ENCODE measurements at regions of chr2 and their contacts with region 1.

Region 1: DNA sequence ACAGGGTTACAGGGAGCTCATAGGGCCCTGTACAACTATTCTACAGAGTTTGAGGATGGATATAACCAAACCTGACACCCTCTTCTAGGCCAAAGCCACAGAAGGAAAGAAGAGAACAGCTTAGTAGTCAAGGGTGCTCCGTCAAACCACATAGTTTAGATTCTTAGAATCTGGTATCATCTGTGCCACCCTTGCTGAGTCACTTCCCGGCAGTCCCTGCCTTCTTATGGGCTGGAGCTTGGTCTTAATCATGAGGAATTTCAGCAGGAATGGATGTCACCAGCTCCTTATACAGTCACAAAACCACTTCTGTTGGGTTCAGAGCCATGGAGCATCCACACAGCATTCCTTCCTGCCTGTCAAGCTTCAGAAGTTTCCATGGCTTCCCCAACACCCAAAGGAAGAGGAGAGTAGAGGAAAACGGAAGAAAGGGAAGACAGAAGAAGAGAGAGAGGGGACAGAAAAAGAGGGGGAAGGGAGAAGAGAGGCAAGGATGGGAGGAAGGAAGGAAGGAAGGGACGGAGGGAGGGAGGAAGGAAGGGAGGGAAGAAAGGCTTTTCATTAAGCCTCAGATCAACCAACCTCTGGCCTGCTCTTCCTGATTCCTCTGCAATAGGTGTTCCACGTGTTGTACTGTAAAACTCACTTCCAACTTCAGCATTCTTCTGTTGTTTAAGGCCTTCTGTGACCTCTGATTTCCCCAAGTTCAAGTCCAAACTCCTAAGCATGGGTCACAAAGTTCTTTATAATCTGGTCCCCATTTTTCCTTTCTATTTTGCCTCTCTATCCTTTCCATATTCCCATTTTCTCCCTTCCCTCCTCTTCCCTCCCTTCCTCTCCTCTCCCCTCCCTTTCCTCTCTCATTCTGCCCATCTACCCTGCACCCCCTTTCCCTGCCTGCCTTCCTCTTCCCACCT is 246.1 kb upstream of the TNP1 start:
- DNase-seq: peak; percentile 48 to 93
- H3K4me3 ChIP-seq: no peak overlapping the region
- H3K27ac ChIP-seq: peak overlapping the region; percentile 82 to 86
- H3K4me1 ChIP-seq: peaks cover 3 to 18% of the 10 kb centered on the region in 2 donors
- H3K27me3 ChIP-seq: no peaks in the 10 kb centered on the region
- CTCF ChIP-seq: no peak

Region 2: DNA sequence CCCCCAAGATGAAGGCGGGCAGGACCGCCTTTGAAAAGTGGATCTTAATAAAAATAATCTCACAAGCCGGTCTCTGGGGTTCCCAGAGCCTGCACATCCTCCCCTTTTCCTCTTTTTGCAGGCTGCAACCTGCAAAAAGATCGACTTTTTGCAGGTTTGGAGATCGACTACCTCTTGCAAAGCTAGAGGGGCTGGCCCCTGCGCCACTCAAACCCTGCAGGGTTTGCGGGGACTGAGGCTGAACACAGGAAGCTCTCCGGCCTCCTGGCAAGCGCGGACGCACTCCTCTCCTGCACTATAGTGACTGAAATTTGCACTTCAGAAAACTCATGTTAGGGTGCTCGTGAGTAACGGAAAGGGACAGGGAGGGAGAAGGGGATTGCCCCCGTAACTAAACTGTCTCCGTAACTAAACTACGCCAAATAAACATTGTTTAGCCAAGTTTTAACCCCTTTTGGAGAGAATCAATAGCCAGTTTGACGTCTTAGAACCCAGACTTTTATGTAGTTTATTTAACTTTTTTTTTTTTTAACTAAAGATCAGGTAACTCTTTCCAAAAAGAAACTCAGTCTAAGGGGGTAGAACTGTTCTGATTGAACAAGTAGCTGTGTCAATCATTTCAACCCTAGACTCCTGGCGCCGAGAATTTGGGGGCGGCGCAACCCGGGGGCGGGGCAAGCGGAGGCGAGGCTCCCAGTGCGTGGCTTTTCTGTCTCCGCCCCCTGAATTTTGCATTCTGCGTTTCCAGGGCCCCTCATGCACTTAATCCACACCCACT is 413.2 kb before region 1 on chr2:
- intact Hi-C with region 1: loop called (anchors 2 kb)
- DNase-seq: peak; percentile 64 to 93
- H3K4me3 ChIP-seq: peak overlapping the region; percentile 58 to 89
- H3K27ac ChIP-seq: peak overlapping the region; percentile 87 to 93
- H3K4me1 ChIP-seq: peaks cover 20 to 49% of the 10 kb centered on the region in 2 donors
- H3K27me3 ChIP-seq: no peaks in the 10 kb centered on the region
- CTCF ChIP-seq: no peak

Region 3: DNA sequence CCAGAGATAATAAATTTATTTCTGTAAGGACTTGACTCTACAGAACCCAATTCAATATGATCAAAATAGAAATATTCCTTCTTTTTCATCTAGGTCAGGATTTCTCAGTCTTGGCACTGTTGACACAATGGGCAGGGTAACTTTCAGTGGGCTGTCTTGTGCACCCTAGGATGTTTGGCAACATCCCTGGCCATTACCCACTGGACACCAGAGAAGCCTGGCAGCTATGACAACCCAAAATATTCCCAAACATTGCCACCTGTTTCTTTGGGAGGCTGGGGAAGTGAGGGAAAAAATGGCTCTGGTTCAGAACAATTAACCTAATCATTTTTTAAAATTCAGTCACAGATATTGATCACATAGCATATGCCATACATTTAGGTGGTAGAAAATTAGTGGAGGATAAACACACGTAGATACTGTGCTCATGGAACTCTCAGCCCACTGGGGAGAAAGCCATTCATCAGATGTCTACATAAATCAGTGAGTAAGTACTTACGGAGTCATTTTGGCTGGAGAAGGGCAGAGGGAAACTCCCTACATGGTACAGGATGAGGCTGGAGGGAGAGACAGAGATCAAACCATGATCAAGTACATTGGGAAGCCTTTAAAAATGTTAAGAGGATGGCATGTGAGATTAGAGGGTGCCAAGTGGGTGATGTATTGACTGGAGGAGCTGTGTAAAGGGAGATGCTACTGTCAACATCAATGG is 245.4 kb before region 1 on chr2:
- intact Hi-C with region 1: no loop called
- DNase-seq: no peak
- H3K4me3 ChIP-seq: no peak overlapping the region
- H3K27ac ChIP-seq: no peak overlapping the region
- H3K4me1 ChIP-seq: peaks cover 0 to 3% of the 10 kb centered on the region in 2 donors
- H3K27me3 ChIP-seq: no peaks in the 10 kb centered on the region
- CTCF ChIP-seq: no peak

Region 4: DNA sequence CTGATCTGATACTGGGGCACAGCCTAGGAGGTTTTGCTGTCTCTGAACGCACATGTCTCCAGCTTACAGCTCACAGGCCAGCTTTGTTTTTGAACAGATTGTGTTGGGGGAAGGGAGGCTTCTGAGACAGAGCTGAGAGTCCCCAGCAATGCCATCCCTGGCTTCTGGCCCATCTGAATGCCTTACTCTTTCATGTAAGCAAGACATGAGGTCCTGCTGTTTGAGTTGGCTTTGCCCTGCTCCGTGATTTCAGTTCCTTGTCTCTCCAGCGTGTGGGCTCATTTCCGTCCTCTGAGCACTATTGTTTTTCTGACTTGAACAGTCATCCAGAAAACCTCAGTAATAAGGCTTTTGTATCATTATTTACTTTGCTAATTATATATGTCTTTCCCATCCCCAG is 51.2 kb before region 1 on chr2:
- intact Hi-C with region 1: loop called (anchors 5 kb)
- DNase-seq: peak in 1 of 2 donors; percentile 70
- H3K4me3 ChIP-seq: no peak overlapping the region
- H3K27ac ChIP-seq: peak overlapping the region; percentile 78 to 89
- H3K4me1 ChIP-seq: peaks cover 13 to 45% of the 10 kb centered on the region in 2 donors
- H3K27me3 ChIP-seq: no peaks in the 10 kb centered on the region
- CTCF ChIP-seq: no peak

Region 5: DNA sequence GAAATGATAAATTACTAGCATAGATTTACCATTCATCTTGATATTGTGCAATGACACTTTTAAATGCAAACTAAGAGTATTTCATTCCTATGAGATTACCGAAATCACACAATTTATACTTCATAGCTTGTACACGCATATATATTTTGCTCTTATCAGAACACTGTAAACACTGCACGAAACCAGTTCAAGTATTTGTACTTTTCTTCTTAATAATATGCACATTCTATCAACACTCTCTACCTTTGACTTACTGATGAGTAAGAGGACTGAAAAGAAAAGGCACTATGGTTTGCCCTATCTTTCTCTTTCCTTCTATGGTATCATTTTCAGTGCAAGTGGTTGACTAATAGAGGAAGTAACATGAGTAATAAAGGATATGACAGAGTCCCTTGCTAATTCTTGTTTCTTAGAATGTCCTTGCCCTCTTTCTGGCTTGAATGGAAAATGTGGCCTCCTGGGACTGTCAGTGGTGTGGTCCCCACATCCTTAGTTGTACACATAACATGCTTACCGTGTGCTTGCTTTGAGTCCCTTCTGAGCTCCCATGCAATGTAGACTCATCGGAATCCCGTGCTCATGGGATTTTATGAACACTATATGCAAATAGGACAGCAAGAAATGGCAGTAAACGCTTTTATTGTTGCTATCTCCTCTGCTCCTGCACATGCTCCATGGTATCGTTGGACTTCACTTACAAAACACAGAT is 117.4 kb after region 1 on chr2:
- intact Hi-C with region 1: loop called (anchors 5 kb)
- DNase-seq: peak; percentile 35 to 88
- H3K4me3 ChIP-seq: no peak overlapping the region
- H3K27ac ChIP-seq: peak overlapping the region; percentile 66 to 70
- H3K4me1 ChIP-seq: peaks cover 3 to 32% of the 10 kb centered on the region in 2 donors
- H3K27me3 ChIP-seq: no peaks in the 10 kb centered on the region
- CTCF ChIP-seq: no peak